WTC11 (cell line): ENCODE measurements at regions of chr11 and their contacts with region 1.

Region 1: DNA sequence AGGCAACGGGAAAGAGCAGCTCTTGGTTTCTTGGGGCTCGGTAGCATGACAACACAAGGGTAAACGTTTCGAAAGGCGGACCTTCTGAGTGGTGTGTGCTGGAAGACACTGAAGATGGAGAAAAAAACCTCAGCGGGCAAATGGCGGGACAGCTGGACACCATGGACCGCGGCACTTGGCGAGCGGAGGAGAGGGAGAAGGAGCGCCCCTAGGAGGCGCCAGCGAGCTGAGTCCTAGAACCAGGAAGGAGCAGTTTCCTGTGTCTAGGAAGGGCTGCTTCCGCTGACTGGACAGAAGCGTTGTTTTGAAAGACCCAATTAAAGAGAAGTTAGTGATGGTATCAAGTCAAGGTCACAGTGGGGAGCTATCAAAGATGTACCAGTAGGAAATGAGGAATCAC is 44.0 kb upstream of the OPCML start:
- DNase-seq: peak; percentile 86
- ATAC-seq: peak; percentile 69
- H3K4me3 Mint-ChIP-seq: no peak overlapping the region
- H3K27ac Mint-ChIP-seq: no peak overlapping the region
- H3K4me1 Mint-ChIP-seq: peaks cover 31% of the 10 kb centered on the region
- H3K27me3 Mint-ChIP-seq: no peaks in the 10 kb centered on the region; the same call in 1 of the 2 replicates
- CTCF ChIP-seq: peak; percentile 78

Region 2: GRCh38 chr11:133531971-133532651 is 44.2 kb before region 1 on chr11 and contains the start of gene OPCML:
- CTCF ChIA-PET with region 1: interaction called, 10 read pairs
- POLR2A ChIA-PET with region 1: no interaction called
- DNase-seq: peak; percentile 26
- ATAC-seq: peak; percentile 41
- H3K4me3 Mint-ChIP-seq: peak within 1 kb of the TSS; percentile 85
- H3K27ac Mint-ChIP-seq: 0 out of 2 replicates have a peak within 1 kb of the TSS, but pooled peaks have one; percentile 4
- H3K4me1 Mint-ChIP-seq: peaks cover 75% of the 10 kb centered on the region
- H3K27me3 Mint-ChIP-seq: peaks cover 30% of the 10 kb centered on the region
- CTCF ChIP-seq: no peak
- total RNA-seq, gene OPCML: 1.5 to 1.8 TPM (median 1.7 TPM) in 3 replicates

Region 3: GRCh38 chr11:133553885-133554740 is 22.2 kb before region 1 on chr11:
- CTCF ChIA-PET with region 1: interaction called, 12 read pairs
- POLR2A ChIA-PET with region 1: no interaction called
- DNase-seq: no peak
- ATAC-seq: no peak
- H3K4me3 Mint-ChIP-seq: no peak overlapping the region
- H3K27ac Mint-ChIP-seq: no peak overlapping the region
- H3K4me1 Mint-ChIP-seq: peaks cover 9% of the 10 kb centered on the region
- H3K27me3 Mint-ChIP-seq: no peaks in the 10 kb centered on the region
- CTCF ChIP-seq: no peak

Region 4: DNA sequence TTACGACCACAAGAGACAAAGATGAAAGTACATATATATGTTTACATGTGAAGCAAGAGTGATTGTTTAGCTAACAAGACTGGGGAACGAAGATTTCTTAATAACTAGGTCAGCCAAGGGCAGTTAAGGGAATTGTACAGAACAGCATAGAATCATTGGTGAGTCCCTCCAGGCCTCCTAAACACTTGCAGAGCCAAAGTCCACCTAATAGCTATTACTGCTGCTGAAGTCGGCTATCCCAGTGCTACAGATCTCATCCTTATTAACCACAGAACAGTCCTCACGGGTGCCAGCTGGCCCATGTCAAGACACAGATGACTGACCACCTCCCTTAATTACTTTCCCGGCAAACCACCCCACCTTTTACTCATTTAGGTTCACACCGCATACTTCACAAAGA is 24.4 kb after region 1 on chr11:
- CTCF ChIA-PET with region 1: interaction called, 12 read pairs
- POLR2A ChIA-PET with region 1: no interaction called
- DNase-seq: no peak
- ATAC-seq: no peak
- H3K4me3 Mint-ChIP-seq: no peak overlapping the region
- H3K27ac Mint-ChIP-seq: no peak overlapping the region
- H3K4me1 Mint-ChIP-seq: peaks cover 24% of the 10 kb centered on the region
- H3K27me3 Mint-ChIP-seq: peaks cover 8% of the 10 kb centered on the region
- CTCF ChIP-seq: no peak

Region 5: DNA sequence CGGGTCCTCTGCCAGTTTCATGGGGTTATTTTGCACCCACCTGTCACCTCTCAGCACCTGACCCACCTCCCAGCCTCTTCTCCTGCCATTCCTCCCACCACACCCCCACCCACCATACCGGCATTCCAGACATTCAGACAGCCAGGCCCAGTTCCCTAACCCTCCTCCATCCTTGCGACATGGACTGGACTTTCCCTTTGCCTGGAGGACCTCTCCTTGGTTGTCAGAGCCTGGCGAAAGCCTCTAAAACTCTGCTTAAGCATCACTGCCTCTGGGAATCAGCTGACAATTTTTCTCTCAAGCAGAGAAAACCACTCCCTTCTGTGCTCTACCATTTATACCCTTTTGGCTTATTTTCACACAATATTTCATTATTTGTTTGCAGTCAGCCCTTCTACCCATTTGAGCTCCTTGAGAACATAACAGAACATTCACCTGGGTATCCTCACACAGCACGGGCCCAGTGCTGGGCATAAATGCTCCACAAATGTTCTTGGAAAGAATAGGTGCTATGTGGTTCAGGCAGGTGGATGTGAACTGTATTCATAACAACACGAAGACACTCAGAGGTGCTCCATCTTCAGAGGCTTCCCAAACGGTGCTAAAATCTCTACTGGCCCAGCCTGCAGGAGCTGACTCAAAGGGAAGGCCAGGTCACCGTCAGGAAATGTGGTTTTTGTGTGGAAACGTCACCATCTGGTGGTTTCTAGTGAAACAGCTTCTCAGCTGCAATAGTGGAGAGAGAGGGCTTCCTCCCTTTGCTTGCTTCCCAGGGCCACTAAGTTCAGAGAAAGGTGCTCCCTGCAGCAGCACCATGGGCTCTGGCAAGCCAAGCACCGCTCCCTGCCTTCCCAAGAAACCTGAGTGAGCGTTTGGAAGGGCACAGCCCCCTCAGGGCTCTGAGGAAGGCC is 258.6 kb after region 1 on chr11:
- CTCF ChIA-PET with region 1: interaction called, 16 read pairs
- POLR2A ChIA-PET with region 1: no interaction called
- DNase-seq: peak; percentile 72
- ATAC-seq: peak; percentile 84
- H3K4me3 Mint-ChIP-seq: no peak overlapping the region
- H3K27ac Mint-ChIP-seq: 0 out of 2 replicates have a peak overlapping the region, but pooled peaks have one; percentile 0
- H3K4me1 Mint-ChIP-seq: peaks cover 19% of the 10 kb centered on the region
- H3K27me3 Mint-ChIP-seq: no peaks in the 10 kb centered on the region; the same call in 1 of the 2 replicates
- CTCF ChIP-seq: peak; percentile 60